ENCODE measurements at regions of chr2 and their contacts with region 1.

Region 1: DNA sequence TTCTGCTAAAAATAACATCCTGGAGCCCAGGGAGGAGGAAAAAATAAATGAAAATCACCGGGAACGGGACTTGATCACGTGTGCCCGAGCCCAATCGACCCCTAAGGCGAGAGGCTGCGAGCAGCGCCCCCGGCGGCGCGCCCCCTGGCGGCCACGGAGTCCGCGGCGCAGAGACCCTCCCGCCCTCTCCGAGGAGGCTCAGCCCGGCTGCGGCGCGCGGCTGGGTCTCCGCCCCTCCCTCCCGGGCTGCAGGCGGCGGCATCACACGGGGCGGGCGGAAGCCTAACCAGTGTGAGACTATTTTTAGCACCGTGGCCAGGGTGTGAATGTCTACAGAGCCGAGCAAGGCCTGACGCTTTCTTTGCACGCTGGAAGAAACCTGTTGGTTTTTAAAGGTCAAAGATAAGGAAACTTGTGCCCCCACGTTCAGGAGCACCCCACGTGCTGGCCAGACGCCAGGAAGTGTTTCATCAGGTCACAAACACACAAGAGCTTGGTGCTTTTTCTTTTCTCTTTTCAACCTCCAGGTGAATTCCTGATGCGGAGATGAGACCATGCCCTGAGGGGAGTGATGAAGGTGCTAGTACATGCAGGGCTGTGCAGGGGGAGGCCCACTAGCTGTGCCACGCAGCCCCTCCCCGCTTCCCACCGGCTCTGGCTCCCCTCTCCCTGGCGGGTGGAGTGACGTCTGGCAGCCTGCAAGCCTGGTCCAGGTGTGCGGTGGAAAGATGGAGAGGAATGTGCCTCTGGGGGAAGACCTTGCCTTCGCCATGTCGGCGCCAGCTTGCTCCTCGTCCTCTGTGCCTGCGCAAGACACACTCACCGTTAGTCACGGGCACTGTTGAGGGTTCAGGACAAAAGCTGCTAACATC is 35.3 kb upstream of the DNMT3A start:
- DNase-seq: peak; percentile 86 to 94 (median 89)
- ATAC-seq: peak; percentile 93 to 99 (median 98)
- H3K4me3 ChIP-seq: peak overlapping the region in 9 of 12 donors; percentile 21 to 50 (median 36)
- H3K27ac ChIP-seq: peak overlapping the region in 4 of 12 donors; percentile 29 to 59 (median 40)
- H3K4me1 ChIP-seq: peaks cover 0 to 44% (median 13%) of the 10 kb centered on the region in 12 donors
- H3K27me3 ChIP-seq: no peaks in the 10 kb centered on the region
- CTCF ChIP-seq: peak; percentile 92 to 100 (median 98)
- POLR2A ChIP-seq: peak in 1 of 2 donors; percentile 11

Region 2: GRCh38 chr2:25314514-25315315 is 62.3 kb before region 1 on chr2:
- intact Hi-C with region 1: loop called in 1 of 10 experiments (anchors 5 kb)
- DNase-seq: peak; percentile 79 to 85 (median 85)
- ATAC-seq: peak; percentile 17 to 83 (median 53)
- H3K4me3 ChIP-seq: peak overlapping the region in 5 of 12 donors; percentile 2 to 20 (median 14)
- H3K27ac ChIP-seq: peak overlapping the region; percentile 64 to 91 (median 82)
- H3K4me1 ChIP-seq: peaks cover 3 to 71% (median 61%) of the 10 kb centered on the region in 12 donors
- H3K27me3 ChIP-seq: no peaks in the 10 kb centered on the region
- CTCF ChIP-seq: no peak
- POLR2A ChIP-seq: peak in 1 of 2 donors; percentile 34

Region 3: GRCh38 chr2:25342372-25343186 is 34.4 kb before region 1 on chr2:
- intact Hi-C with region 1: loop called in 8 of 10 experiments (anchors 1 to 2 kb)
- DNase-seq: peak; percentile 87 to 92 (median 87)
- ATAC-seq: peak; percentile 76 to 93 (median 88)
- H3K4me3 ChIP-seq: peak overlapping the region; percentile 31 to 99 (median 76)
- H3K27ac ChIP-seq: peak overlapping the region; percentile 47 to 95 (median 84)
- H3K4me1 ChIP-seq: peaks cover 3 to 37% (median 33%) of the 10 kb centered on the region in 12 donors
- H3K27me3 ChIP-seq: no peaks in the 10 kb centered on the region
- CTCF ChIP-seq: peak; percentile 89 to 99 (median 98)
- POLR2A ChIP-seq: peak in 1 of 2 donors; percentile 33

Region 4: GRCh38 chr2:25514043-25514637 is 137.2 kb after region 1 on chr2:
- intact Hi-C with region 1: loop called in 1 of 10 experiments (anchors 10 kb)
- DNase-seq: no peak
- ATAC-seq: no peak
- H3K4me3 ChIP-seq: no peak overlapping the region
- H3K27ac ChIP-seq: no peak overlapping the region
- H3K4me1 ChIP-seq: peaks cover 0 to 17% (median 0%) of the 10 kb centered on the region in 12 donors
- H3K27me3 ChIP-seq: no peaks in the 10 kb centered on the region
- CTCF ChIP-seq: no peak
- POLR2A ChIP-seq: no peak

Region 5: GRCh38 chr2:25521665-25522387 is 144.8 kb after region 1 on chr2:
- intact Hi-C with region 1: loop called in 7 of 10 experiments (anchors 5 to 10 kb)
- DNase-seq: peak in 2 of 5 donors; percentile 23 to 27
- ATAC-seq: peak in 3 of 4 donors; percentile 55 to 73 (median 60)
- H3K4me3 ChIP-seq: peak overlapping the region in 9 of 12 donors; percentile 16 to 44 (median 33)
- H3K27ac ChIP-seq: peak overlapping the region in 1 of 12 donors; percentile 15
- H3K4me1 ChIP-seq: peaks cover 0 to 10% (median 0%) of the 10 kb centered on the region in 12 donors
- H3K27me3 ChIP-seq: no peaks in the 10 kb centered on the region
- CTCF ChIP-seq: peak; percentile 64 to 82 (median 78)
- POLR2A ChIP-seq: no peak

Region 6: DNA sequence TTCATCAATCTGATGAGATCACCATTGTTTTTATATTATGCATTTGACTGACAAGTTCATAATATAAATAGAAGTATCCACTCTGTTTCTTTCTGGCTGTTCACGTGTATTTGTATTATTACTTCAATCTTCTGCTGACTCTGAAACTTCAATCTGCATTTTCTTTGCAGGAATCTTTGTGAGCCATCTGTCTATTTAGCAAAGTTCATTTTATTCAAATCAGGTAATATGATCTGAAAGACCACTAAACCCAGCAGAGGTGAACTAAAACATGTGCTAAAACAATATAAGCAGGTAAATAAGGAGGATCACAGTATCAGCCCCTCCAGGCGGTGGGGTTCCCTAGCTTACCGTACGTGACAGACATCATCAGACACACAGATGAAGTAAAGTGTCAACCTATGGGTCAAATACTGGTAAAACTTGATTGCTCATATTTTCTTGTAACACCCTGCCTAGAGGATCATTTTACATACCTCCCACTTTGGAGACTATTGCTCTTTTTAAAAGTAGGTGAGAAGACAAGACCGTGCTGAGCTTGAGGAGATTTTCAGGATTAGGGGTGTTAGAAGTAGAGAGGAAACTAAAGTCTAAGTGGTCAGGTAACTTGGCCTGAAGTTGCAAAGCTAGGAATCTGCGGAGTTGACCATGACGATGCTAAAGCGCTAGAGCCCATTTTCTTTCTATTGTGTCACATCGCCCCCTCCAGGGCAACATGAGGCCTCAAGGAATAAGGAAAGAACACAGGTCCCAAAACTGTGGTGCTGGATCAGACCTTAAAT is 287.4 kb after region 1 on chr2:
- intact Hi-C with region 1: loop called in 2 of 10 experiments (anchors 10 kb)
- DNase-seq: peak in 4 of 5 donors; percentile 42 to 53 (median 50)
- ATAC-seq: peak; percentile 42 to 86 (median 79)
- H3K4me3 ChIP-seq: peak overlapping the region in 1 of 12 donors; percentile 10
- H3K27ac ChIP-seq: no peak overlapping the region
- H3K4me1 ChIP-seq: peaks cover 0 to 9% (median 0%) of the 10 kb centered on the region in 12 donors
- H3K27me3 ChIP-seq: no peaks in the 10 kb centered on the region
- CTCF ChIP-seq: peak; percentile 39 to 84 (median 69)
- POLR2A ChIP-seq: no peak

Region 7: DNA sequence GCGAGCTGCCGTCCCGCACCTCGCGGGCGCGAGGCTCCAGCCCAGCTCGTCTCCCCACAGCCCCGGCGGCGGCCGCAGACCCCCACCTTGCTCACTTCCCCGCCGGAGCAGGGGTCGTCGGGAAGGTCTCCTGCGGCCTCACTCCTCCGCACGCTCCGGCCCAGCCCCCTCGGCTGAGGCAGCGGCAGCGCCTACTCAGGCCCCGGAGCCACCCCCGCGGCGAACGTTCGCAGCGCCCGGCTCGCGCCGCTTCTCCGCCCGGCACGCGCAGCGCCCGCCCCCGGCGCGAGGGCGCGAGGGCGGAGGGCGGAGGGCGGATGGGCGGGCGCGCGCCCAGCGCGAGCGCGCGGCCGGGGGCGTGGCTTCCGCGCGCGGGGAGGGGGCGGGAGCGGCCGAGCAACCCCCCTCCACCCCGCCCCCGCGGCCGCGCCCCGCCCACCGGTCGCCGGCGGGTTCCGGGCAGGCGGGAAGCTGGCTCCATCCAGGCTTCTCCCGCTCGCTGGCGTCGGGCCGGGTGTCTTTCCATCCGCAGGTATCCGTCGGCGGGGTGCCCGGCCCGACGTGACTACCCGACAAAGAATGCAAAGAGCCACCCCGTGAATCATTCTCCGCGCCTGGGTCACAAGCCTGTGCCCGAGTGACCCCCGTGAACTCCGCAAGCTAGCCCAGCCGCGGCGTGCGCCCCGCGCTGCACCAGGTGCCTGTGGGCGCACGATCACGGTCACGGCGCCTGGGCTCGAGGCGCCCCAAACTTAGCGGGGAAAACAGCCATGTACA is 296.5 kb after region 1 on chr2 and contains the start of gene DTNB:
- intact Hi-C with region 1: loop called in 3 of 10 experiments (anchors 10 kb)
- DNase-seq: peak; percentile 81 to 91 (median 86)
- ATAC-seq: peak; percentile 37 to 92 (median 88)
- H3K4me3 ChIP-seq: peak within 1 kb of the TSS; percentile 65 to 99 (median 90)
- H3K27ac ChIP-seq: peak within 1 kb of the TSS; percentile 54 to 92 (median 83)
- H3K4me1 ChIP-seq: peaks cover 0 to 21% (median 11%) of the 10 kb centered on the region in 12 donors
- H3K27me3 ChIP-seq: no peaks in the 10 kb centered on the region
- CTCF ChIP-seq: no peak
- POLR2A ChIP-seq: peak in 1 of 2 donors; percentile 42
- total RNA-seq, gene DTNB: 2.5 to 17.3 (median 6.3) TPM